CD4-positive, alpha-beta T cell (primary cell): ENCODE measurements at regions of chr15 and their contacts with region 1.

Region 1: DNA sequence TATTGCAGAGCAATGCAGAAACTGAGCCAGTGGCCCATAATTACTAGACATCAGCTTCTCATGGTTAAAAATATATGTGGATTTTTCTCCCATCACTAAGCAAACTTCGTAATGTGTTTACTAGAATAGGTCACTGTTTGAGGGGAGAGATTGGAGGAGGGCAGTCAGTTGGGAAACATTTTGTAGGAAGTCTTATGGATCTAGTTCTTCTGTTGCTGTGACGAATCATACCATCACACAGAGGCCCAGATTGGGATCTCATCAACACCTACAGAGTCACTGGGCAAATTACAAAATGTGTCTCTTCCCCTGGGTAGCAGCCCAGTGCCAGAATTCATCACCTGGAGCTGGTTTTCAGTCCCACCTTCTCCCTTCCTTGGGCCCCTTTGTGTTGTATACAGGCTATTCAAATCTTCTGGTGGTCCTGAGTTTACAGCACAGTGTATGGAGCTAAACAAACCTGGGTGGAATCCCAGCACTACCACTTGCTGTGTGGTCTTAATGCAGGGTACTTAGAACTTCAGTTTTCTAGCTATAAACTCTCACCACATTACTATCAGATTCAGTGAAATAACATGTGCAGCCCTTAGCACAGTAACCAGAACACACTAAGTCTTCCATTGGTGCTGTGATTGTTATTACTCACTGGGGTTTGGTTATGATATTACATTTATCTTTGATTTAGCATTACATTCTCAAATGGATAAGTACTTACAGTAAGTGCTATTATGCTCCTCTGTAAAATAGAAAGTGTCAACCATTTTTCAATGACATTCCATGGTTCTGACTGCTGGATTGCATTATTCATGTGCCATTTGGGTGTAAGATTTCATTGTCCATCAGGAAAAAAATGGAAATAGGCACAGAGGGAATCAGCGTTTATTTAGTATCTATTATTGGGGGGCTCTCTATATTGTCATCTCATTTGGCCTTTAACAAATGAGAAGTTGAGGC is 81.7 kb downstream of the PDE8A start:
- DNase-seq: no peak
- ATAC-seq: no peak
- H3K4me3 ChIP-seq: no peak overlapping the region
- H3K4me3 Mint-ChIP-seq: no peak overlapping the region
- H3K27ac ChIP-seq: no peak overlapping the region
- H3K27ac Mint-ChIP-seq: no peak overlapping the region
- H3K4me1 ChIP-seq: no peaks in the 10 kb centered on the region
- H3K4me1 Mint-ChIP-seq: peaks cover 13% of the 10 kb centered on the region
- H3K27me3 ChIP-seq: no peaks in the 10 kb centered on the region
- H3K27me3 Mint-ChIP-seq: no peaks in the 10 kb centered on the region
- CTCF ChIP-seq: no peak

Region 2: DNA sequence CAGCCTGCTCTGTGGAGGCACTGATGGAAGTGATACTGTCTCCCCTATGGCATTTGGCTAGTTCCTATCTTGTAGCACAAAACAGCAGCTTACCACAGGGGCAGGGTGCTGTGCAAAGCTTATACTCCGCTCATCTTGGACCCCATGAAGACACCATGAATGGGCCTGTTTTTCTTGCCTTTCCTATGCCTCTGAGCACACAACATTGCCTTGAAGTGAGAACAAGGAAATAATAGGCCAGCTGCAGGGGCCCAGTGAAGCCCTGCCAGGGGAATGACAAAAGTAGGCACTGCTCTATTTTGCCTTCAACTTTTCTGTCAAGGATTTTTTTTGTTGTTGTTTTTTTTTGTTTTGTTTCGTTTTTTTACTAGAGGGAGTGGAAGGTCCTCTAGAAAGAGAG is 28.6 kb after region 1 on chr15:
- CTCF ChIA-PET with region 1: no interaction called
- POLR2A ChIA-PET with region 1: no interaction called
- intact Hi-C with region 1: loop called in 1 of 2 experiments (anchors 1 kb)
- DNase-seq: no peak
- ATAC-seq: no peak
- H3K4me3 ChIP-seq: no peak overlapping the region
- H3K4me3 Mint-ChIP-seq: no peak overlapping the region
- H3K27ac ChIP-seq: no peak overlapping the region
- H3K27ac Mint-ChIP-seq: no peak overlapping the region
- H3K4me1 ChIP-seq: no peaks in the 10 kb centered on the region
- H3K4me1 Mint-ChIP-seq: no peaks in the 10 kb centered on the region
- H3K27me3 ChIP-seq: no peaks in the 10 kb centered on the region
- H3K27me3 Mint-ChIP-seq: no peaks in the 10 kb centered on the region
- CTCF ChIP-seq: no peak

Region 3: DNA sequence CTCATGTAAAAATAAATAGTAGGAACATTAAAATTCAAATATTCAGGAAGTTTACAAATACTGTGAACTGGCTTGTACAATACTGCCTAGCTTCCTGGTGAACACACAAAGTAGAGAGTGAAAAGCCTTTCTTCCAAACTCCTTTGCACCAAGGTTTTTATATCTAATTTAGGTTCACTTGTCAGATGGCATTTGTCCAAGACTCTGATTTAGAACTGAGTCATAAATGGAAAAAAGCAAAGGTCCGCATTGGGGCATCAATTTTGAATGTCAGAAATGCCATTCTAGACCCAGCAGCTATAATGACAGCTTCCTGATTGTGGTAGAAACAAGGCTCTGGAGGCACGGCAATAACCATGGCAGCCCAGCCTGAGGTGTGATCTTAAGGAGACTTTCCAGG is 78.9 kb after region 1 on chr15:
- CTCF ChIA-PET with region 1: no interaction called
- POLR2A ChIA-PET with region 1: no interaction called
- intact Hi-C with region 1: no loop called
- DNase-seq: no peak
- ATAC-seq: no peak
- H3K4me3 ChIP-seq: no peak overlapping the region
- H3K4me3 Mint-ChIP-seq: no peak overlapping the region
- H3K27ac ChIP-seq: no peak overlapping the region
- H3K27ac Mint-ChIP-seq: no peak overlapping the region
- H3K4me1 ChIP-seq: no peaks in the 10 kb centered on the region
- H3K4me1 Mint-ChIP-seq: no peaks in the 10 kb centered on the region
- H3K27me3 ChIP-seq: no peaks in the 10 kb centered on the region
- H3K27me3 Mint-ChIP-seq: no peaks in the 10 kb centered on the region
- CTCF ChIP-seq: no peak

Region 4: GRCh38 chr15:86267892-86268291 is 1204.5 kb after region 1 on chr15:
- CTCF ChIA-PET with region 1: no interaction called
- POLR2A ChIA-PET with region 1: no interaction called
- intact Hi-C with region 1: no loop called
- DNase-seq: no peak
- ATAC-seq: no peak
- H3K4me3 ChIP-seq: no peak overlapping the region
- H3K4me3 Mint-ChIP-seq: no peak overlapping the region
- H3K27ac ChIP-seq: no peak overlapping the region
- H3K27ac Mint-ChIP-seq: no peak overlapping the region
- H3K4me1 ChIP-seq: no peaks in the 10 kb centered on the region
- H3K4me1 Mint-ChIP-seq: no peaks in the 10 kb centered on the region
- H3K27me3 ChIP-seq: no peaks in the 10 kb centered on the region
- H3K27me3 Mint-ChIP-seq: no peaks in the 10 kb centered on the region
- CTCF ChIP-seq: no peak